Activated naive CD4-positive, alpha-beta T cell treated with anti-CD3 and anti-CD28 coated beads for 36 hours (primary cell): ENCODE measurements at regions of chr15 and their contacts with region 1.

Region 1: GRCh38 chr15:43133430-43134156 is at the start of gene TMEM62:
- DNase-seq: peak; percentile 72
- H3K4me3 Mint-ChIP-seq: peak within 1 kb of the TSS; percentile 84
- H3K27ac Mint-ChIP-seq: peak within 1 kb of the TSS; percentile 80
- H3K4me1 Mint-ChIP-seq: peaks cover 16% of the 10 kb centered on the region
- H3K27me3 Mint-ChIP-seq: peaks cover 6% of the 10 kb centered on the region
- total RNA-seq, gene TMEM62: 5.8 to 6.6 TPM

Region 2: GRCh38 chr15:42736793-42737528 is 396.6 kb before region 1 on chr15 and contains the start of gene CDAN1:
- CTCF ChIA-PET with region 1: no interaction called
- intact Hi-C with region 1: loop called (anchors 5 kb)
- DNase-seq: peak; percentile 92
- H3K4me3 Mint-ChIP-seq: peak within 1 kb of the TSS; percentile 78
- H3K27ac Mint-ChIP-seq: peak within 1 kb of the TSS; percentile 69
- H3K4me1 Mint-ChIP-seq: peaks cover 11% of the 10 kb centered on the region
- H3K27me3 Mint-ChIP-seq: no peaks in the 10 kb centered on the region
- total RNA-seq, gene CDAN1: 19.9 to 21.9 TPM